Prostate gland (tissue), 2 donors: ENCODE measurements at regions of chr10 and their contacts with region 1.

Region 1: DNA sequence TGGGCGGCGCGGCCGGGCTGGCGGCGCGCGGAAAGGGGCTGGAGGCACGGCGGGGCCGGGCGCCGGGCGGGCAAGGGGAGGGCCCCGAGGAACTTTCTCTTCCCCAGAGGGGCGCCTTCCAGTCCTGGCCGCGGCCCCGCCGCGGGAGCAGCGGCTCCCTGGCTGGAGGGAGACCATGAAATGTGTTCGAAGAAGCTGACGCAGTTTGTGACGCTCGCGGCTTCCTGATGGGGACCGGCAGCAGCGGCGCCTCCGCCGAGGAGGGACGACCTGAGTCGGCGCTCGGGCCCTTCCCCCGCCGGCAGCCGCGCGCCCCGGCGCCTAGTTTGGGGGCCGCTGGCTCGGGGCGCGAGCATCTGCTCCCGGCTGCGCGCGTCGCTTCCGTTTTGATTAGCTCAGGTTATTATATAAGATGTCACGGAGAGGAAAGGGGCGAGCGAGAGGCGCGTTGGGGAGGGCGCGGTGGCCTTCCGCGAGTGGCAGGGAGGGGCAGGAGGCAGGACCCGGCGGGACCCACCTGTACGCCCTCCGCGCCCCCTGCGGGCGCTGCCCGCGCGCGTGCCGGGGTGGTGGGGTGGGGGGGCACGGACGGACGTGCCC is 57.1 kb upstream of the PCGF5 start:
- DNase-seq: peak; percentile 39
- H3K4me3 ChIP-seq: peak overlapping the region; percentile 88 to 89
- H3K27ac ChIP-seq: peak overlapping the region; percentile 94 to 95
- H3K4me1 ChIP-seq: no peaks in the 10 kb centered on the region
- H3K27me3 ChIP-seq: no peaks in the 10 kb centered on the region
- CTCF ChIP-seq: peak in 1 of 4 experiments; percentile 20
- POLR2A ChIP-seq: no peak

Region 2: DNA sequence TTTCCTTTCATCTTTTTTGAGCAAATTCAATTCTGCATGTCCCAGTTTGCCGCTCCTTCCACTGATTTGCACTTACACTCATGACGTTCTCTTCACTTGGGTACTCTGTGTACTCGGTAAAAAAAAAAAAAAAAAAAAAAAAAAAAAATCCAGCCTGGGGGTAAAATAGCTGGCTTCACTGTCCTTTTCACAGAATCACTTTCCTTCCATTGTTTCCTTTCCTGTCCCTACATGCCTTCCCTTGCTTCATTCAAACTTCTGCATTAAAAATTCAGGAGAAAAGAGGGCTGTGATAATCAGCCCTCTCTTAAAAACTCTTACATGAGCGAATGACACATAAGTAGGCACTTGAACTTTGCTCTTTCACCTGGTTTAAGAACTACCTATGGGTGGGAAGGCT is 251.2 kb before region 1 on chr10:
- intact Hi-C with region 1: loop called (anchors 10 kb)
- DNase-seq: peak; percentile 22
- H3K4me3 ChIP-seq: no peak overlapping the region
- H3K27ac ChIP-seq: peak overlapping the region in 1 of 2 donors; percentile 37
- H3K4me1 ChIP-seq: peaks cover under 1% of the 10 kb centered on the region
- H3K27me3 ChIP-seq: no peaks in the 10 kb centered on the region
- CTCF ChIP-seq: no peak
- POLR2A ChIP-seq: no peak

Region 3: DNA sequence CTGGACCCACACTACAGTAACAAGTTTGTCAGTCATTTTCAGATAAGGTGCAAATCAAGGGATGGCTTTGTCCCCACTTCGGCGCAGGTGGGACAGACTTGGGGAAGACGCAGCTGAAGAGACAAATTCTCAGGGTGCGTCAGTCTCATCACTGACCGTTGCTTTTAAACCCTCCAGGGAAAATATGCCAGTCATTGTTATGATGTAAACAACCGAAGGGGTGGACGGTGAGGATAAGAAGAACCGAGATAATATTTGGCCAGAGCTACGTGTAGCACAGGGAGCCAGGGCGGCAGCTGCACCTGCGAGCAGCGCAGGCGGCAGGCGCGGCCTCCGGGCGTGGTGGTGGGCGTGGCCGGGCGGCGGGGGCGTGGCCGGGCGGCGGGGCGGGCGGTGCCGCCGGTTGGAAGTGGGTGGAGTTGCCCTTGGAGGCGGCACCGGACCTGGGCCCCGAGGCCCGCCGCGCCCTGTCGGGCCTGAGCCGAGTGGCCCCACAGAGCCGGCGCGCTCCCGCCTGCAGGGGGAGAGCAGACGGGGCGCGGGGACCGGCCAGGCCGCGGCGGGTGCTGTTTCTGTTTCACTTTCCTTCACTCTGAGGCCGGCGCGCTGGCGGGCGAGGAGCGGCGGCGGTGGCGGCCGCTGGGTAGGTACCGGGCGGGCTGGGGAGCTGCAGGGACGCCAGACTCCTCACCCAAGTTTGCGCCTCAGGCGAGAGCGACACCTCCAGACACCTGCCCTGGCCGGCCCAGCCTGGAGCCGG is 57.0 kb after region 1 on chr10 and contains the start of gene PCGF5:
- intact Hi-C with region 1: loop called (anchors 2 kb)
- DNase-seq: peak; percentile 90
- H3K4me3 ChIP-seq: peak within 1 kb of the TSS; percentile 89 to 93
- H3K27ac ChIP-seq: peak within 1 kb of the TSS; percentile 92 to 94
- H3K4me1 ChIP-seq: no peaks in the 10 kb centered on the region
- H3K27me3 ChIP-seq: no peaks in the 10 kb centered on the region
- CTCF ChIP-seq: peak in 3 of 4 experiments; percentile 11 to 77 (median 70)
- POLR2A ChIP-seq: peak; percentile 88
- total RNA-seq, gene PCGF5: 35.7 to 41.3 TPM

Region 4: DNA sequence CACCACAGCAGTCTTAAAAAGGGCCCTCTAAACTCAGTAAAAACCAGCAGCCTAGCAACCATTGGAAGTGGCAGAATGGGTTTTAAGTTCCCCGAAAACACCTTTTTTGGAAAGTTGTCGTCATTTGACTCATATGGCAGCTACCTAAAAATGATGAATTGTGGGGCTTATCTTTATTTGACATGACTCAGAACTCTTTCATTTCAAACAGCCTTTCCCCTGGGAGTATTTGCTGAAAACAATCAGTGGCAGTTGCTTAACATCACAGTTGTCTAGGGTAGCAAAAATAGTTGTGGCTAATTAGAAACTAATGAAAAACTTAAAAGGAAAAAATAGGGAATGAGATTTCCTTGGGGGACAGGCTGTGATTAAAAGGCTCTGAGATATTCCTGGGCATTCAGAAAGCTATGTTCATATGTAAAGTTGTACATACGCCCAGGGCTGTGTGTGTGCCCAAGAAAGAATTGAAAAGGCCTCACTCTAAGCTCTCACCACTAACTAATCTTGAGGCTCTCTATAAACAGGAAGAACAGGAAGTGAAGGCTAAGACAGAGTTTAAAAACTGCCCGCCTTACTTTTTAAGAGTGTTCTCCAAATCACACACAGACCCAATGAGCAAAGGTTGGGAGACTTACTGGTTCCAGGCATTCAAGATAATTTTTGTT is 165.1 kb after region 1 on chr10:
- intact Hi-C with region 1: no loop called
- DNase-seq: no peak
- H3K4me3 ChIP-seq: no peak overlapping the region
- H3K27ac ChIP-seq: no peak overlapping the region
- H3K4me1 ChIP-seq: no peaks in the 10 kb centered on the region
- H3K27me3 ChIP-seq: no peaks in the 10 kb centered on the region
- CTCF ChIP-seq: no peak
- POLR2A ChIP-seq: no peak